CD14-positive monocyte (primary cell): ENCODE measurements at regions of chr16 and their contacts with region 1.

Region 1: DNA sequence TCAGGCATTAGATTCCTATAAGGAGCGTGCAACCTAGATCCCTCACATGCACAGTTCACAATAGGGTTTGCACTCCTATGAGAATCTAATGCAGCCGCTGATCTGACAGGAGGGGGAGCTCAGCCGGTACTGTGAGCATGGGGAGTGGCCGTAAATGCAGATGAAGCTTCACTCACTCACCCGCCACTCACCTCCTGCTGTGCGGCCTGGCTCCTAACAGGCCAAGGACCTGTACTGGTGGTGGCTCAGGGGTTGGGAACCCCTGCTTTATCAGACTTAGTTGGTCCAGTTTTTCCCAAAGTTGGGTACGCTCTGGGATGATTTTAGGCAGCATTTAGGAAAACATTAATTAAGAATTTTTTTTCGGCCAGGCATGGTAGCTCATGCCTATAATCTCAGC is 103.8 kb downstream of the MARF1 start:
- DNase-seq: no peak
- H3K4me3 ChIP-seq: no peak overlapping the region
- H3K4me3 Mint-ChIP-seq: no peak overlapping the region
- H3K27ac ChIP-seq: no peak overlapping the region
- H3K27ac Mint-ChIP-seq: no peak overlapping the region
- H3K4me1 ChIP-seq: no peaks in the 10 kb centered on the region
- H3K4me1 Mint-ChIP-seq: peaks cover 4% of the 10 kb centered on the region
- H3K27me3 ChIP-seq: no peaks in the 10 kb centered on the region
- H3K27me3 Mint-ChIP-seq: peaks cover 3 to 4% (median 3%) of the 10 kb centered on the region in 3 donors
- CTCF ChIP-seq: no peak

Region 2: DNA sequence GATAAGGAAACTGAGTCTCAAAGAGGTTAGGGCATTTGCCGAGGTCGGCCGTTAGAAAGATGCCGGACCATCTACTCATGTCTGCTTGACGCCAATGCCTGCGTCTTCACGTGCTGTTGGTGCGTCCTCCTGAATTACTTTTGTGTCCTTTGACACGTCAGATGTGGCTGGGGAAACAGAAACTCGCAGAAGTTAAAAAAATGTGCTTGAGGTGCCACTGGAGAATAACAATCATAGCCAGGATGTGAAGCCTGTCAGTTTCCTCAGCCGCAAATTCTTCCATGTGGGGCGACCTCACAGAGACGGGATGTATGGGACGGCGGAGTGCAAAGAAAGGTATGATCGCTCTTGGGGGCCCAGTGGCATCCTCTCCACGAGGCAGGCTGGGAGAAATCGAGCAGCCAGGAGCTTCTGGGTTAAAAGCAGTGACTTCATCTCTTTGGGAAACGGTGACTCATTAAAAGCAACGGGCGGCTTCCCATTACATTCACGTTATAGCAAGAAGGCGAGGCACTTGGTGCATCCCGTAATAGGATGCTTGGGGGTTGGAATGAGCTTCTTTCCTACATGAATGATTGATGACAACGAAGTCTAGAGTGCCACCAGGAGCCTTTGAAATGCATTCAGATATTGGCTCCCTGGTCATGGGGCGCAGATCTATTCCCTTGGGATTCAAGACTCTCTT is 37.0 kb before region 1 on chr16:
- intact Hi-C with region 1: no loop called
- DNase-seq: no peak
- H3K4me3 ChIP-seq: no peak overlapping the region
- H3K4me3 Mint-ChIP-seq: no peak overlapping the region
- H3K27ac ChIP-seq: no peak overlapping the region
- H3K27ac Mint-ChIP-seq: peak overlapping the region in 1 of 7 donors; percentile 18
- H3K4me1 ChIP-seq: peaks cover 7 to 8% of the 10 kb centered on the region in 2 donors
- H3K4me1 Mint-ChIP-seq: peaks cover 9% of the 10 kb centered on the region
- H3K27me3 ChIP-seq: no peaks in the 10 kb centered on the region
- H3K27me3 Mint-ChIP-seq: peaks cover 8 to 18% (median 11%) of the 10 kb centered on the region in 3 donors
- CTCF ChIP-seq: no peak

Region 3: GRCh38 chr16:15523092-15523541 is 16.1 kb before region 1 on chr16:
- intact Hi-C with region 1: no loop called
- DNase-seq: peak; percentile 70 to 78 (median 76)
- H3K4me3 ChIP-seq: peak overlapping the region; percentile 18 to 58 (median 22)
- H3K4me3 Mint-ChIP-seq: peak overlapping the region; percentile 78 to 88
- H3K27ac ChIP-seq: peak overlapping the region; percentile 31 to 71
- H3K27ac Mint-ChIP-seq: peak overlapping the region; percentile 85 to 98 (median 96)
- H3K4me1 ChIP-seq: peaks cover 57 to 62% of the 10 kb centered on the region in 2 donors
- H3K4me1 Mint-ChIP-seq: peaks cover 60% of the 10 kb centered on the region
- H3K27me3 ChIP-seq: no peaks in the 10 kb centered on the region
- H3K27me3 Mint-ChIP-seq: peaks cover 9 to 13% (median 11%) of the 10 kb centered on the region in 3 donors
- CTCF ChIP-seq: peak; percentile 58

Region 4: DNA sequence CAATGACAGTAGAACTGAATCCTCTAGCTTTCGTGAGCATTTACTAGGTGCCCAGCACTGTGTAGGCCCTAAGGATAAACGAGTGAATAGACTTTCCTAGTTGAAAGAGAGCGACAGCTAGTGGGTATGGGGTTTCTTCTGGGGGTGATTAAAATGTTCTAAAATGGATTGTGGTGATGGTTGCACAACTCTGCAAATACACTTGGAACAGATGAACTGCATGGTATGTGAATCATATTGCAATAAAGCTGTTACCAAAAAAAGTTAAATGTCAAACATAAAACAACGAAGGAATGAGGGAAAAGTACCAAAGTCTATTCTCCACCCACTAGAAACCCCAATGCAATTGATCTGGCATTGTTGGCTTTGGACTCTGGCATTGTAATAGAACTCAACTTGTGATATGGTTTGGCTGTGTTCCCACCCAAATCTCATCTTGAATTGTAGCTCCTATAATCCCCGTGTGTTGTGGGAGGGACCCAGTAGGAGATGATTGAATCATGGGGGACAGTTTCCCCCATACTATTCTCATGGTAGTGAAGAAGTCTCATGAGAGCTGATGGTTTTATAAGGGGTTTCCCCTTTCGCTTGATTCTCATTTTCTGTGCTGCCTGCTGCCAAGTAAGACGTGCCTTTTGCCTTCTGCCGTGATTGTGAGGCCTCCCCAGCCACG is 33.3 kb after region 1 on chr16:
- intact Hi-C with region 1: loop called in 1 of 2 experiments (anchors 5 kb)
- DNase-seq: peak in 1 of 3 donors; percentile 15
- H3K4me3 ChIP-seq: peak overlapping the region in 1 of 3 experiments; percentile 31
- H3K4me3 Mint-ChIP-seq: peak overlapping the region in 1 of 2 donors; percentile 42
- H3K27ac ChIP-seq: peak overlapping the region in 1 of 2 donors; percentile 74
- H3K27ac Mint-ChIP-seq: peak overlapping the region; percentile 89 to 94 (median 93)
- H3K4me1 ChIP-seq: peaks cover 49 to 58% of the 10 kb centered on the region in 2 donors
- H3K4me1 Mint-ChIP-seq: peaks cover 53% of the 10 kb centered on the region
- H3K27me3 ChIP-seq: no peaks in the 10 kb centered on the region
- H3K27me3 Mint-ChIP-seq: peaks cover 0 to 1% (median 0%) of the 10 kb centered on the region in 3 donors
- CTCF ChIP-seq: no peak